Naive thymus-derived CD4-positive, alpha-beta T cell (primary cell): ENCODE measurements at regions of chr2 and their contacts with region 1.

Region 1: DNA sequence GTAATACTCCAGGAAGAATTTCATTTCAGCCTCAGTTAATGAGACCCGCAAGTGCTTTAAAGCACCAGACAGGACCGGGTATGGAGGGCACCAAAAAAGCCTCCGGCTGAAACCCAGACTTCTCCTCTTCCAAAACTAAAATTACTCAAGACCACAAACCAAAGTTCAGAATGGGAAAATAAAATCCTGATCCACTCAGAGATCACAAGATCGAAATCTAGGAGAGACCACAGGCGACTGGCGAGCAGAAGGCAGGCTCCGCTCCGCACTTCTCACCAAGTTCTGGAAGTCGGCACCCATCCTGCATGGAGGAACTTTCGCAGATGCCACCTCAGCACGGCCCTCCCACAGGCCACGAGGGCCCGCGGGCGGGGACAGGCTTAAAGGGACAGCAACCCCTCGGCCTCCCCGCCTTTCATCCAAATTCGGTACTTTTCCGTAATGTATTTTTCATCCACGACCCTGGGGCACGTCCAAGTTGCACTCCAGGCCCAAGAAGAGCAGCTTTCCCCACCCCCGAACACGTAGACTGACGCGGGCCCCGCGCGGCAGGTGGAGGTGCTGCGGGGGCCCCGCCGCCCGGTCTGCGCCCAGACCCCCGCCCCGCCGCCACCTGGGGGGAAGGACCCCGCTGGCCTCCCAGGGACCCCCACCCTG is 43.7 kb downstream of the HDLBP start:
- DNase-seq: peak; percentile 37 to 69 (median 42)
- ATAC-seq: peak; percentile 83
- H3K4me3 ChIP-seq: peak overlapping the region; percentile 63
- H3K4me3 Mint-ChIP-seq: peak overlapping the region; percentile 91 to 97 (median 94)
- H3K27ac ChIP-seq: peak overlapping the region; percentile 76
- H3K27ac Mint-ChIP-seq: peak overlapping the region; percentile 70 to 94 (median 89)
- H3K4me1 ChIP-seq: peaks cover 8 to 16% of the 10 kb centered on the region in 2 donors
- H3K4me1 Mint-ChIP-seq: peaks cover 41 to 65% (median 60%) of the 10 kb centered on the region in 7 donors
- H3K27me3 ChIP-seq: no peaks in the 10 kb centered on the region
- H3K27me3 Mint-ChIP-seq: no peaks in the 10 kb centered on the region

Region 2: DNA sequence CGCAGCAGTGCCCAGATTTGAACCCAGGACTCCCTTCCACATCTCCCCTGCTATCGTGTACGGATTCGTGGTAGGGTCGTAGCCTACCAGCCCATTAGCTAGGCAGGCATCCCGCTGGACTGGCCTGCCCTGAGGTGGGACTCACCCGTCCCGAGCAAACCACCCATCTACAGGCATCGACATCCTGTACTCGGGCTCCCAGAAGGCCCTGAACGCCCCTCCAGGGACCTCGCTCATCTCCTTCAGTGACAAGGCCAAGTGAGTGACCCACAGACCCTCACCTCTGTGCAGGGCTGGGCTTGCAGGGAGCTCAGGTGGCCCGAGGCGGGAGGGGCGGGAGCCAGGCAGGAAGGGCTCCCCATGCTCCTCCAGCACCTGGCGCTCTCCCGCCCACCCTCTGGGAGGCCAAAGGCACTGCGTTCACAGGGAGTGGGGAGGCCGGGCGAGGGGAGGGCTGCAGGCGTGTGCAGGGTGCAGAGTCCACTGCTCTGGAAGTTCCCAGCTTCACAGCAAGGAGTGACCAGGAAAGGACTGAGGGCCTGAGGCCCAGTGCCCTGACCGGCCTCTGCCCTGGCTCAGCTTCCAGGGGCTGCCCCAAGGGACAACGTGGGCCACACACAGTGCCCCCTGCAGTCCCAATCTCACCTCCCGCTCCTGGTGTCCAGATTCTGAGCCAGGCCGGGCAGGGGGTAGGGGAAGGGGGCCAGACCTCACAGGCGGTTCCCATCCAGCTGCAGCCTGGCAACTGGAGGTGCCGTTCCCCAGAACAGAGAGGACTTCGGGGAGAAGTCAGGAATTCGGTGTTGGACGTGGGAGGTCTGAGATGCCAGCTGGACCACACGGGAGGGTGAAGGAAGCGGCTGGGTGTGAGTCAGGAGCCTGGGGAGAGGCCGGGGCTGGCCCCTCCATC is 397.7 kb before region 1 on chr2:
- CTCF ChIA-PET with region 1: no interaction called
- POLR2A ChIA-PET with region 1: no interaction called
- intact Hi-C with region 1: no loop called
- DNase-seq: no peak
- ATAC-seq: no peak
- H3K4me3 ChIP-seq: no peak overlapping the region
- H3K4me3 Mint-ChIP-seq: no peak overlapping the region
- H3K27ac ChIP-seq: no peak overlapping the region
- H3K27ac Mint-ChIP-seq: no peak overlapping the region
- H3K4me1 ChIP-seq: no peaks in the 10 kb centered on the region
- H3K4me1 Mint-ChIP-seq: no peaks in the 10 kb centered on the region
- H3K27me3 ChIP-seq: no peaks in the 10 kb centered on the region
- H3K27me3 Mint-ChIP-seq: no peaks in the 10 kb centered on the region

Region 3: GRCh38 chr2:241289597-241289996 is 17.8 kb after region 1 on chr2:
- CTCF ChIA-PET with region 1: no interaction called
- POLR2A ChIA-PET with region 1: no interaction called
- intact Hi-C with region 1: loop called in 1 of 2 experiments (anchors 2 kb)
- DNase-seq: no peak
- ATAC-seq: no peak
- H3K4me3 ChIP-seq: no peak overlapping the region
- H3K4me3 Mint-ChIP-seq: peak overlapping the region in 1 of 10 donors; percentile 29
- H3K27ac ChIP-seq: no peak overlapping the region
- H3K27ac Mint-ChIP-seq: peak overlapping the region in 4 of 9 donors; percentile 23 to 41 (median 33)
- H3K4me1 ChIP-seq: peaks cover 4 to 12% of the 10 kb centered on the region in 2 donors
- H3K4me1 Mint-ChIP-seq: peaks cover 35 to 78% (median 71%) of the 10 kb centered on the region in 7 donors
- H3K27me3 ChIP-seq: no peaks in the 10 kb centered on the region
- H3K27me3 Mint-ChIP-seq: no peaks in the 10 kb centered on the region

Region 4: DNA sequence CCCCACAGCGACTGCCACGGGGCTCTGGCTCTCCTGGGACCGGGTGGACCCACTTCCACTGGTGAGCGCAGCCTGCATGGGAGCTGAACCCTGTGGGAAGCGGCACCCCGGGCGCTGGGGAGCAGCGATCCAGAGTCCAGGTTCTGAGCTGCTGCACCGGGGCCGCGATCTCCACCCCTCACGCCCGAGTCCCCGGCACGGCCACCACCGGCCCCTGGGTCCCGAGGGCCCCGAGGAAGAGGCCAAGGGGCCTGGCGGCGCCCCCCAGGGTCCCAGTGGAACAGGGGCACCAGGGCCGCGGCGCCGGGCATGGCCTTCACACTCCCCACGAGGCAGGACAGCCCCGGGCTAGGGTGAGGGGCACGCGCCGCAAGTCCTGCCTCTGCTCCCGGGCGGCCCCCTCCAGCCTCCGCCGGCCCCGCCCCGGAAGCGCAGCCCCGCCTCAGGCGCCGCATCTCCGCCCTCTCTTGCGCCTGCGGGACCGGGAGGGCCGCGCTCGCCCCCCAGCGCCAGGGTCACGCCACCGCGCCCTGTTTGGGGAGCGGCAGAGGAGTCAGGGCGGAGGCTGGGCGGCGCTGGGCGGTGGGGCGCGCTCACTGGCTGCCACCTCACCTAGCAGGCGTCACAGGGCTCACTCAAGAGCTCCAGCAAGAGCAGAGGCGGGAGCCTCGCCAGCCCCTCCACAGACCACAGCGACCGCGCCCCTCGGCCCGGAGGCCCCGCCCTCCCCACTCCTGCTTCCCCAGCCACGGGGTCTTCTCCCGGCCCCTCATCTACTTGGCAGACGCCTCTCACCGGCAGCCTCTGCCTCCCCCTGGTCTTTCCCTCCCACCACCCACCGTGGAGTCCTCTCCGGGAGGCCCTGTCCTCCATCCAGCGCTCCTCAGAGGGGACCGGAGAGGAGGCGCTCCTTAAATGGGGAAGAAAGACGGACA is 338.4 kb after region 1 on chr2:
- CTCF ChIA-PET with region 1: no interaction called
- POLR2A ChIA-PET with region 1: no interaction called
- intact Hi-C with region 1: loop called in 1 of 2 experiments (anchors 1 kb)
- DNase-seq: peak; percentile 87 to 92 (median 90)
- ATAC-seq: peak; percentile 99
- H3K4me3 ChIP-seq: peak overlapping the region; percentile 53
- H3K4me3 Mint-ChIP-seq: peak overlapping the region in 9 of 10 donors; percentile 61 to 79 (median 71)
- H3K27ac ChIP-seq: peak overlapping the region; percentile 61
- H3K27ac Mint-ChIP-seq: peak overlapping the region; percentile 9 to 95 (median 68)
- H3K4me1 ChIP-seq: peaks cover 14 to 17% of the 10 kb centered on the region in 2 donors
- H3K4me1 Mint-ChIP-seq: peaks cover 16 to 33% (median 24%) of the 10 kb centered on the region in 7 donors
- H3K27me3 ChIP-seq: no peaks in the 10 kb centered on the region
- H3K27me3 Mint-ChIP-seq: no peaks in the 10 kb centered on the region